Right cardiac atrium (tissue), 5 donors: ENCODE measurements at regions of chr4 and their contacts with region 1.

Region 1: DNA sequence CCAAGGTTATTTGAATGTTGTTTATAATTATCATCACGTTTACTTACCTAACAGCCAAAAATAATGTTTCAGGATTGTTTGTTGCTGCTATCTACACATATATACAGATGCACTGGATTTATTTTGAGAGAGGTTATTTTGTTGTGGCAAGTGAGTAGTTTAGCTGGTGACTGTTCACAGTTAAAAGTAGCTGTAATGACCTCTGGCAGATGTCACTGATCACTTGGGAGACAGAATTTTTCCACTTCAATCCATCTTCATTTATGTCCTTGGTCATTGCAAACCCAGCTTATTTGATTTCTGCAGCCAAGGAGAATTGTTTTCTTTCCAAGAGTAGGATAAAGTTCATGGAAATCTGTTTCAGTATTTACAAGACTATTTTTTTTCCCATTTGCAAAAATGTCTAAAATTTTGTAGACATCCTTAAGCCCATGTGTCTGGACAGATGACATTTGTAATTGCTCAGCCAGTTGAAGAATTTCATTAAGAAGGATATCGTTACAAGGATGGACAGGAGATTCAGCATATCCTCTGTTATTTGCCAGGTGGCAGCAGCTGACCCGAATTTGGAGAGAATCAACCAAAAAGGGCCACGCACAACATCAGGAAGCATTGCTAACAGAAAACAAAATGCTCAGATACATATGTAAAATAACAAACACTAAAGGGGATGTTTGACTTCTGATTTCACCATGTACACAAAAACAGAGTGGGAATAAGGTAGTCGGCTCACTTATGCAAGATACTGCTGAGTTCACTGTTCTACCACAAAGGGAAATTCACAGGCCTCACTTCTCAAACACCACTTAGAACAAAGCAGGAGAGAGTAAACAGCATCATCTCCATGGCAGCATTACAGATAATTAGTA is 64.5 kb downstream of the GPRIN3 start:
- DNase-seq: no peak
- ATAC-seq: peak in 1 of 2 donors; percentile 54
- H3K4me3 ChIP-seq: no peak overlapping the region
- H3K27ac ChIP-seq: no peak overlapping the region
- H3K4me1 ChIP-seq: no peaks in the 10 kb centered on the region
- H3K27me3 ChIP-seq: no peaks in the 10 kb centered on the region

Region 2: GRCh38 chr4:88569939-88570455 is 673.1 kb before region 1 on chr4:
- intact Hi-C with region 1: no loop called
- DNase-seq: no peak
- ATAC-seq: no peak
- H3K4me3 ChIP-seq: no peak overlapping the region
- H3K27ac ChIP-seq: no peak overlapping the region
- H3K4me1 ChIP-seq: no peaks in the 10 kb centered on the region
- H3K27me3 ChIP-seq: no peaks in the 10 kb centered on the region

Region 3: GRCh38 chr4:89069481-89069880 is 173.6 kb before region 1 on chr4:
- intact Hi-C with region 1: no loop called
- DNase-seq: no peak
- ATAC-seq: no peak
- H3K4me3 ChIP-seq: no peak overlapping the region
- H3K27ac ChIP-seq: no peak overlapping the region
- H3K4me1 ChIP-seq: no peaks in the 10 kb centered on the region
- H3K27me3 ChIP-seq: no peaks in the 10 kb centered on the region

Region 4: GRCh38 chr4:89307446-89308160 is 64.5 kb after region 1 on chr4 and contains the start of gene GPRIN3:
- intact Hi-C with region 1: loop called in 1 of 4 experiments (anchors 10 kb)
- DNase-seq: peak; percentile 54 to 82 (median 78)
- ATAC-seq: peak; percentile 79 to 81
- H3K4me3 ChIP-seq: peak within 1 kb of the TSS; percentile 76
- H3K27ac ChIP-seq: peak within 1 kb of the TSS; percentile 55
- H3K4me1 ChIP-seq: no peaks in the 10 kb centered on the region
- H3K27me3 ChIP-seq: no peaks in the 10 kb centered on the region
- total RNA-seq, gene GPRIN3: 4.8 to 10.3 (median 9.0) TPM